ENCODE measurements at regions of chr11 and their contacts with region 1.

Region 1: DNA sequence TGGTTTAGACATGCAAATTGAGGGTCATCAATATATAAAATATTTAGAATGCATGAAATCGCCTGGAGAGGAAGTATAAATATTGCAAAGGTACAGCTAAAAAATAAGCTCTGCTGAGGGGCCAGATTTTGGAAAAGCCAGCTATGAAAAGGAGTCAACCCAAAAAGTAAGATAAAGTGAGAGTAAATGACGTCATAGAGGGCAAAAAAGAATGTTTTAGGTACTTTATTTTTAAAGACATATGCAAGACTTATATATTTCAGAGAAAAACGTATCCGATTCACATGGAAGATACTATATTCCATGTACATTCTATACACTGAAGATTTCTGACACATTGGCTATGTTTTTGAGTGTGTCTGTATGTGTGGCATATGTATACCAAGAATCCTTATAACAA is 13.6 kb downstream of the GRM5 start:
- DNase-seq: no peak
- ATAC-seq: no peak
- H3K4me3 ChIP-seq: no peak overlapping the region
- H3K4me3 Mint-ChIP-seq: no peak overlapping the region
- H3K27ac ChIP-seq: no peak overlapping the region
- H3K27ac Mint-ChIP-seq: no peak overlapping the region
- H3K4me1 ChIP-seq: no peaks in the 10 kb centered on the region
- H3K4me1 Mint-ChIP-seq: no peaks in the 10 kb centered on the region
- H3K27me3 ChIP-seq: no peaks in the 10 kb centered on the region
- H3K27me3 Mint-ChIP-seq: no peaks in the 10 kb centered on the region
- CTCF ChIP-seq: no peak

Region 2: GRCh38 chr11:89021339-89021738 is 30.9 kb before region 1 on chr11:
- CTCF ChIA-PET with region 1: no interaction called
- POLR2A ChIA-PET with region 1: no interaction called
- intact Hi-C with region 1: loop called in 1 of 2 experiments (anchors 1 kb)
- DNase-seq: no peak
- ATAC-seq: no peak
- H3K4me3 ChIP-seq: no peak overlapping the region
- H3K4me3 Mint-ChIP-seq: no peak overlapping the region
- H3K27ac ChIP-seq: no peak overlapping the region
- H3K27ac Mint-ChIP-seq: no peak overlapping the region
- H3K4me1 ChIP-seq: no peaks in the 10 kb centered on the region
- H3K4me1 Mint-ChIP-seq: peaks cover 3% of the 10 kb centered on the region
- H3K27me3 ChIP-seq: no peaks in the 10 kb centered on the region
- H3K27me3 Mint-ChIP-seq: no peaks in the 10 kb centered on the region
- CTCF ChIP-seq: no peak